OCI-LY7 (cell line): ENCODE measurements at regions of chr6 and their contacts with region 1.

Region 1: DNA sequence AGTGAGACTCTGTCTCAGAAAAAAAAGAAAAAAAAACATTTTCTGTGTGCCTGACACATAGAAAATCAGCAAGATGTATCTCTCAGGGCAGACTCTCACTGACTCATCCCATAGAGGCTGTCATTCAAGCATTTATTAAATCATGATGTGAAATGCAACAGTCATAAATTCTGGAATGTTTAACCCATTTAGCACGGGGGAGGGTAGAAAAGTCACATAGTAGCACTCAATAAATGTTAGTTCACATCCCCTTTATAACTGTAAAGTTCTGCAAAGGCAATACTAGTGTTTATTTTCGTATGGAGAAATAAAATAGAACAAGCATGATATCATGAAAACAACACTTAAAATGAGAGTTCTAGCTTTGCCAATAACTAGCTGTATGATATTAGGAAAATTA is 15.5 kb upstream of the CARMIL1 start:
- DNase-seq: no peak
- H3K4me3 ChIP-seq: no peak overlapping the region
- H3K27ac ChIP-seq: no peak overlapping the region
- H3K4me1 ChIP-seq: peaks cover 12% of the 10 kb centered on the region
- CTCF ChIP-seq: no peak

Region 2: DNA sequence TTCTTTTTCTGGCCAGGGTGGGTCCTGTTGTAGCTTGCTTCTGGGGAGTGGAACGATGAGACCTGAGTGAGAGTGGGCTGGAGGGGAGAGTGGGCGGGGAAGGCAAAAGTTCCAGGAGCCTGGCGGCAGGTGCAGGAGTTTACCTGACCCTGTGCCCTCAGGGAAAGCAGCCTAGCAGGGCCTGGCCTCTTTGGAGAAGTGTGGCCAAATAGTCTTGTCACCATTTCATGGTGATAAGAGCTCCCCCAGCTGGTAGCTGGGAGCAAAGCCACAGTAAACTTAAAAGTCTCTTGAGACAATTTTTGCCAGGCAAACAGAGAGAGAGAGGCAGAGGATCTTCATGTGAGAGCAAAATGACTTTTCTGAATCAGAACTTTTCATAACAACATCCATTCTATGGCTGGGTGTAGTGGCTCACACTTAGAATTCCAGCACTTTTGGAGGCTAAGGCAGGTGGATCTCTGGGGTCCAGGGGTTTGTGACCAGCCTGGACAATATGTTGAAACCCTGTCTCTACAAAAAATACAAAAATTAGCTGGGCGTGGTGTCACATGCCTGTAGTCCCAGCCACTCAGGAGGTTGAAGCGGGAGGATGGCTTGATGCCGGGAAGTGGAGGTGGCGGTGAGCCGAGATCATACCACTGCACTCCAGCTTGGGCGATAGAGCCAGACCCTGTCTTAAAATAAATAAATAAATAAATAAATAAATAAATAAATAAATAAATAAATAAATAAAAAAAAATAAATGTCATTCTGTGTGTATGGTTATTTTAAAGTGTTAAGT is 226.6 kb after region 1 on chr6:
- CTCF ChIA-PET with region 1: interaction called, 12 read pairs
- POLR2A ChIA-PET with region 1: interaction called, 5 read pairs
- intact Hi-C with region 1: loop called (anchors 1 kb)
- DNase-seq: peak; percentile 93
- H3K4me3 ChIP-seq: no peak overlapping the region
- H3K27ac ChIP-seq: peak overlapping the region; percentile 55
- H3K4me1 ChIP-seq: peaks cover 23% of the 10 kb centered on the region
- CTCF ChIP-seq: peak; percentile 90

Region 3: GRCh38 chr6:25601800-25602673 is 338.4 kb after region 1 on chr6:
- CTCF ChIA-PET with region 1: no interaction called
- POLR2A ChIA-PET with region 1: no interaction called
- intact Hi-C with region 1: loop called (anchors 1 kb)
- DNase-seq: peak; percentile 71
- H3K4me3 ChIP-seq: no peak overlapping the region
- H3K27ac ChIP-seq: no peak overlapping the region
- H3K4me1 ChIP-seq: peaks cover 5% of the 10 kb centered on the region
- CTCF ChIP-seq: peak; percentile 98